GM10248 (cell line): ENCODE measurements at regions of chr20 and their contacts with region 1.

Region 1: DNA sequence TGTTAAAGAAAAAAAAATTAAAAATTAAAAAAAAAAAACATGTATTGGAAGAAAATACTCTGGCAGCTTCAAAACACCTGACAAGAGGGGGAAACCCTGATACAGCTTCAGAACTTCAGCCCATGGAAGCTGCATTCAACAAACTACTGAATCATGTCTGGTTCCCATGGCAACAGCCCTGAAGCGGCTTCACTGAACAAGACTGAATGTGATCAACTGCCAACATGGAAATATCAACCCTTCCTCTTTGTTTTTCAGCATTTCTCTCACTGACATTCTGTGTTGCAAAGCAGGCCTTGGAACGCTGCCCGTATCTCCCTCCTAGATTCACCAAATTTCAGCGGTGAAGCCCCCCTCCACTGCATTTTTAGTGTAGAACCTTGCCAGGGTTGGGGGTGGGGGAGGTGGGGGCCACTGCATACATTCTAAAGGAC is 91.3 kb upstream of the SHLD1 start:
- DNase-seq: peak; percentile 71
- CTCF ChIP-seq: no peak

Region 2: DNA sequence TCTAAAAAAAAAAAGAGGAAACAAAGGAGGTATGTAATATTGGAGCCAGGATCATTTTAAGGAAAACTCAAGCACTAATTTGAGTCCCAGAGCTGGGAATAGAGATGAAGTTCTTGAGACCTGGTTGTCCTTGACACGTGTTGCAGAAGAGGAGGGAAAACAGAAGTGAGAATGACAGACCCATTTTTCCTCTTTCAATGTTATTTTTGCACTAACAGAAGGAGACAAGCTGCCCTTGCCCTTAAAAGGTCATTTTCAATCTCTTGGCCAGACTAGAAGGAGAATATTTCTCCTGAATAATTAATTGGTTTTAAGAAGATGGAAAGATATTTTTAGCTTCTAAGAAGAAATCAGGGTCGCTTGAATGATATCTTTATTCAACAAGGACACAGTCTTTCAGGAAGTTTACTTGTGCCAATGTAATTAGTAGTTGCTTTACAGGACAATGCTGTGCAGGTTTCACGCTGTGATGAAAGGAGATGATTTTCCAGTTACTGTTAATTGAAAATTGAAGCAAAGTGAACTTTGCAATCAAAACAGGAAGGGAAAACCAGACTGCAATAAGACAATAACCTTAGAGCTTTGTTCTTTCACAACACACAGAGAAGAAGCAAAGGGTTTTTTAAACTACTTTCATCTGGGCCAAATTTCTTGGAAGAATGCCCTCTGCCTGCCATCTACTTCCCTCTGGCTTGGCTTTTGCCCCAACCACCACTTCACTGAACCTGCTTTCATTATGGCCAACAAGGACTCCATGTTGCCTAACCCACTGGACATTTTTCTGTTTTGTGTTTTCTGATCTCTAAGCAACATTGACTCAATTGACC is 16.6 kb before region 1 on chr20:
- CTCF ChIA-PET with region 1: interaction called, 37 read pairs
- POLR2A ChIA-PET with region 1: interaction called, 6 read pairs
- DNase-seq: no peak
- CTCF ChIP-seq: no peak